MCF 10A (cell line): ENCODE measurements at regions of chr20 and their contacts with region 1.

Region 1: DNA sequence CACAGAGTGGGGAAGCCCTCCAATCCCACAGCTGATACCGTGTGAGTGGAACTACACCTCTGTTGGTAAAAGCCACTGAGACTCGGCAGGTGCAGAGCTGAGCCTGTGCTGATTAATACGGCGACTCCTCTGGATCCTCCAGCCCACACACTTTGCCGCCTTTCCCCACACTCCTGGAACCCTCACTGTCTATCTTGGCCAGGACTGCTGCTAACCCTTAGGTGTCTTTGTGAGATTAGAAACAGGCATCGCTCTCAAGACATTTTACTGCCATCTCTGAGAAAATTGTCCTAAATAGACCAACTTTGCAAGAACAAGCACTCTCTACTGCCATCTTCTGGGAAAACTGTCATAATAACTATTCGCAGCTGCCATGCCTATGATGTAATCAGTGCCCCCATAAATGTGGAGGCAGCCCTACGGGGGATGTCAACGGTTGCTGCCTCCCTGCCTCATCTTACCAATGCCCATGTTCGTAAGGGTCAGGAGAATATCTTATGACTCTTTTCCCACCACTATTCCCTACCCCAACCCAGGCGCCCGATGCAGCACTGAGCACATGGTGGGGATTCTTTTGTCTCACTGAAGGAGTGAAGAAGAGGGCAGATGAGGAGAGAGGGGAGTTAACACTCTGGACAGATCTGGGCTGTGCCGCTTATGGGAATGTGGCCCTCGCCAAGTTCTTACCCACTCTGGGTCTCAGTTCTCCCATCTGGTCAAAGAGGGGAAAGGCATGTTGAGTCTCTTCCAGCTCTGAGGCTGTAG is 26.1 kb upstream of the KCNB1 start:
- DNase-seq: peak; percentile 57
- H3K4me3 Mint-ChIP-seq: no peak overlapping the region
- H3K27ac Mint-ChIP-seq: no peak overlapping the region
- H3K4me1 Mint-ChIP-seq: peaks cover 16% of the 10 kb centered on the region
- H3K27me3 Mint-ChIP-seq: no peaks in the 10 kb centered on the region
- CTCF ChIP-seq: peak; percentile 69

Region 2: DNA sequence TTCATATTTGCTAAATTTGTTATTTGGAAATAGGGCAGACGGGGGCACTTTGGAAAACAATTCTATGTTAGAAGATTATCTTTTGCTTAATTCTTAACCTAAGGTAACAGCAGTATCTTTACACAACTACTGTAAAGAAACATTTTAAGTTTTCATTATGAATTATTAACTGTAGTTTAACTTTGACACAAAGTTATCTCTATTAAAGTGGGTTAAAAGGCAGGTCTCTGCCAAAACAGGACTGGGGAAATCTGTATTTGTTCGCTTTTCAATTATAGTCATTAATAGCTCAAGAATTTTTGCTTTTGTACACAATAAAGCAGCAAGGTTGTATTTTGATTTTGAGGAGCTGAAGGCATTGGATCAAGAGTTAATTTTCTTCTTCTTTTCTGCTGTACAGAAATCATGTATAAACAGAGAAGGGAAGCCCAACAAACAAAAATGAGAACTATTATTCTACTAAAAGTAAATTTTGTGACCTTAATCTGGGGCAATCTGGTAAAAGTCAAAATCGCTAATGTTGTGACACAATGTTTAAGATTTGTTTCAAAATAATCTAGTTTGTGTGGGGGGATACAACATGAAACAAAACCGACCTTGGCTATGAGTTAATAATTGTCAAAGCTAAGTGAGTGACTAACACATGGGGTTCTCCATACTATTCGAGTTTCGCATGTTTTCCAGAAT is 323.4 kb before region 1 on chr20:
- CTCF ChIA-PET with region 1: no interaction called
- POLR2A ChIA-PET with region 1: no interaction called
- intact Hi-C with region 1: no loop called
- DNase-seq: no peak
- H3K4me3 Mint-ChIP-seq: peak overlapping the region; percentile 38
- H3K27ac Mint-ChIP-seq: no peak overlapping the region
- H3K4me1 Mint-ChIP-seq: peaks cover 6% of the 10 kb centered on the region
- H3K27me3 Mint-ChIP-seq: no peaks in the 10 kb centered on the region
- CTCF ChIP-seq: no peak

Region 3: GRCh38 chr20:49323622-49324238 is 184.9 kb before region 1 on chr20:
- CTCF ChIA-PET with region 1: interaction called, 237 read pairs
- POLR2A ChIA-PET with region 1: no interaction called
- intact Hi-C with region 1: no loop called
- DNase-seq: peak; percentile 76
- H3K4me3 Mint-ChIP-seq: no peak overlapping the region
- H3K27ac Mint-ChIP-seq: no peak overlapping the region
- H3K4me1 Mint-ChIP-seq: no peaks in the 10 kb centered on the region
- H3K27me3 Mint-ChIP-seq: peaks cover 7% of the 10 kb centered on the region
- CTCF ChIP-seq: peak; percentile 35

Region 4: DNA sequence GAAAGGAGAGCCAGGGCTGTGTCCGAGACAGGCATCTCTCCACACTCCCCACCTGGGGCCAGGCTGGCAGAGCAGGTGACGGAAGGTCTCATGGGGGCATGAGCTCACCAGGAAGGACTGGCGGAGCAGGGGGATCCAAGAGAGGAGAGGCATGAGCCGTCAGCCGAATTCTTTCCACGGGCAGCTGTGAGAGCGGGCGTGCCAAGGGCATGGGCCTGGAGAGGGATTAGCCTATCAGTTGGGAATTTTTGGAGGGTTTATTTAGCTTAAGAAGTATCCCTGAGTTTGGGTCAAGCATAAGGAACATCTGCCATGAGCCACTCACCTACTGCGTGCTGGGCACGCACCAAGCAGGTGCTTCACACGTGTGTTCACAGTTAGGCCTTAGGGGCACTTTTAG is 170.6 kb before region 1 on chr20:
- CTCF ChIA-PET with region 1: interaction called, 237 read pairs
- POLR2A ChIA-PET with region 1: interaction called, 5 read pairs
- intact Hi-C with region 1: loop called (anchors 1 kb)
- DNase-seq: no peak
- H3K4me3 Mint-ChIP-seq: no peak overlapping the region
- H3K27ac Mint-ChIP-seq: peak overlapping the region; percentile 57
- H3K4me1 Mint-ChIP-seq: peaks cover 11% of the 10 kb centered on the region
- H3K27me3 Mint-ChIP-seq: peaks cover 3% of the 10 kb centered on the region
- CTCF ChIP-seq: no peak

Region 5: DNA sequence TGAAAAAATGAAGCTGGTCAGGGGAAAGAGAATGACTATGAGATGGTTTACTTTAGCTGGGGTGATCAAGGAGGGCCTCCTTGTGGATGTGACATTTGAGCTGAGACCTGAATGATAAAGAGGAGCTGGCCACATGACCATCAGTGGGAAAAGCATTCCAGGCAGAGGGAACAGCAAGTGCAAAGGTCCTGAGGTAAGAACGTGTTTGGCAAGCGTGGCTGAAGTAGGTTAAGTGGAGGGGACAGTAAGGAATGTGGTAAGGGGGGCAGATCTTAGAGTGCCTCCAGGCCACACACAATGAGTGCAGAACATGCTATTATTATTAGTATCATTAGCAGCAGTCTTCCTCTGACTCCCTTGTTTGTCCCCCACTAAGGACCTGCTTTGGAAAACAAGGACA is 118.8 kb before region 1 on chr20:
- CTCF ChIA-PET with region 1: no interaction called
- POLR2A ChIA-PET with region 1: no interaction called
- intact Hi-C with region 1: no loop called
- DNase-seq: no peak
- H3K4me3 Mint-ChIP-seq: no peak overlapping the region
- H3K27ac Mint-ChIP-seq: no peak overlapping the region
- H3K4me1 Mint-ChIP-seq: peaks cover 26% of the 10 kb centered on the region
- H3K27me3 Mint-ChIP-seq: no peaks in the 10 kb centered on the region
- CTCF ChIP-seq: no peak

Region 6: GRCh38 chr20:49490702-49491110 is 17.9 kb before region 1 on chr20:
- CTCF ChIA-PET with region 1: interaction called, 79 read pairs
- POLR2A ChIA-PET with region 1: interaction called, 4 read pairs
- intact Hi-C with region 1: no loop called
- DNase-seq: no peak
- H3K4me3 Mint-ChIP-seq: no peak overlapping the region
- H3K27ac Mint-ChIP-seq: no peak overlapping the region
- H3K4me1 Mint-ChIP-seq: no peaks in the 10 kb centered on the region
- H3K27me3 Mint-ChIP-seq: peaks cover 42% of the 10 kb centered on the region
- CTCF ChIP-seq: no peak

Region 7: DNA sequence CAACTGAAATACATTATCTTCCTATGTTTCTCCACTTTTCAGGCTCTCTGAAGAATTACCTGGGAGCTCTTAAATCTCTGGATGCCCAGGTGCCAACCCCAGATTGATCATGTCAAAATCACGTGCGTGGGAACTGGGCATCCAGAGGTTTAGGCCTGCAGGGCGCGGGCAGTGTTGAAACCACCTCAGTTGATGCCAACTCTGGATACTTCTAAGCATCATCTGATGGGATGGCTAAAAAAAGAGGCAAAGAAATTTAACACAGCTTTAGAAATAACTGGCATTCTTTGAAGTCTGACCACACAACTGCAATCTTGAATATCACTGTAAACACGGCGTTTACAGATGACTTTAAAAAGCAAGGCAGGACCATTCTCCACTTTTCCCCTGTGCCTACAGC is 17.4 kb after region 1 on chr20:
- CTCF ChIA-PET with region 1: interaction called, 13 read pairs
- POLR2A ChIA-PET with region 1: interaction called, 4 read pairs
- intact Hi-C with region 1: no loop called
- DNase-seq: no peak
- H3K4me3 Mint-ChIP-seq: no peak overlapping the region
- H3K27ac Mint-ChIP-seq: no peak overlapping the region
- H3K4me1 Mint-ChIP-seq: peaks cover 18% of the 10 kb centered on the region
- H3K27me3 Mint-ChIP-seq: no peaks in the 10 kb centered on the region
- CTCF ChIP-seq: no peak

Region 8: GRCh38 chr20:49534255-49534712 is 25.7 kb after region 1 on chr20:
- CTCF ChIA-PET with region 1: interaction called, 19 read pairs
- POLR2A ChIA-PET with region 1: interaction called, 3 read pairs
- intact Hi-C with region 1: no loop called
- DNase-seq: peak; percentile 74
- H3K4me3 Mint-ChIP-seq: no peak overlapping the region
- H3K27ac Mint-ChIP-seq: no peak overlapping the region
- H3K4me1 Mint-ChIP-seq: peaks cover 4% of the 10 kb centered on the region
- H3K27me3 Mint-ChIP-seq: no peaks in the 10 kb centered on the region
- CTCF ChIP-seq: peak; percentile 87

Region 9: GRCh38 chr20:49742948-49743347 is 234.3 kb after region 1 on chr20:
- CTCF ChIA-PET with region 1: no interaction called
- POLR2A ChIA-PET with region 1: no interaction called
- intact Hi-C with region 1: no loop called
- DNase-seq: peak; percentile 13
- H3K4me3 Mint-ChIP-seq: no peak overlapping the region
- H3K27ac Mint-ChIP-seq: no peak overlapping the region
- H3K4me1 Mint-ChIP-seq: peaks cover 5% of the 10 kb centered on the region
- H3K27me3 Mint-ChIP-seq: no peaks in the 10 kb centered on the region
- CTCF ChIP-seq: no peak

Region 10: DNA sequence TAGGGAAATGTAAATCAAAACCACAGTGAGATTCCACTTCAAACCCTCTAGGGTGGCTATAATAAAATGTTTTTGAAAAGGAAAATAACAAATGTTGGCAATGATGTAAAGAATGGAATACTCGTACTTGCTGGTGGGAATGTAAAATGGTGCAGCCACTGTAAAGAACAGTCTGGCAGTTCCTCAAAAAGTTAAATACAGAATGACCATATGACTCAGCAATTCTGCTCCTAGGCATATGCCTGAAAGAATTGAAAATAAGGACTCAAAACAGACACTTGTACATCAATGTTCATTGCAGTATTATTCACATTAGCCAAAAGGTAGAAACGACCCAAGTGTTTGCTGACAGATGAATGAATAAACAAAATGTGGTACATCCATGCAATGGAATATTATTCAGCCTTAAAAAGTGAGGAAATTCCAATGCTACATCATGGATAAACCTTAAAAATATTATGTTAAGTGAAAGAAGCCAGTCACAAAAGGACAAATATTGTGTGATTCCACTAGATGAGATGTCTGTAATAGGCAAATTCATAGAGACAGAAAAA is 417.4 kb after region 1 on chr20:
- CTCF ChIA-PET with region 1: no interaction called
- POLR2A ChIA-PET with region 1: no interaction called
- intact Hi-C with region 1: no loop called
- DNase-seq: no peak
- H3K4me3 Mint-ChIP-seq: no peak overlapping the region
- H3K27ac Mint-ChIP-seq: no peak overlapping the region
- H3K4me1 Mint-ChIP-seq: no peaks in the 10 kb centered on the region
- H3K27me3 Mint-ChIP-seq: no peaks in the 10 kb centered on the region
- CTCF ChIP-seq: no peak